HAP-1 (cell line): ENCODE measurements at regions of chr1 and their contacts with region 1.

Region 1: DNA sequence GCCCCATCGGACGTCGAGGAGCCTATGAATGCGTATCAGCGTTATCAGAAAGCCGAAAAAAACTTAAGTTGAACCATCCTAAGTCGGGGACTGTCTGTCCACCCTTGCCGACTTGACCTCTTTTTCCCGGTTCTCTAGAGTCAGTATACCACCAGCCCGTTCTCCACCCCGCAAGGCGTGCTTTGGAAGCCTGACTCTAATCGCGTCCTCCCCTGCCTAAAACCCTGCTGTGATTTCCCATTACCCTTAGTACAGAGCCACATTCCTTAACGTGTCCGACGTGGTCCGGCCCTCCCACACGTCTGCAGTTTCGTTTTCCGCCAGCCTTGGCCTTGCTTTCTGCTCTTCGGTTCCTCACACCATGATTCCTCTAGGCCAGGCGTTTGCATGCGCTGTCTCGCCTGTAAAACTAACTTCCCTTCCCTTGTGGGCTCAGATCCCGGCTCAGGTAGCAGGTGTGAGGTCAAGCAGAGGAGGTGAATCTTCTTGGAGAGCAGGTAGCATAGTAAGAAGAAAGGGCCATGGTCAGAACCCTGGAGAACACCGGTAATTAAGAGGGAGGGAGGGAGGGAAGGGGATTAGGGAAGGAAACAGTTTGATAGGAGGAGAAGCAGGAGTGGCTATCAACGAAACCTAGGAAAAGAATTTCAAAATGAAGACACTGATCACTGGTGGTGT is 891 bp downstream of the ADPRS start:
- DNase-seq: peak; percentile 26 to 44
- H3K4me3 ChIP-seq: peak overlapping the region; percentile 97
- H3K4me1 ChIP-seq: peaks cover 3% of the 10 kb centered on the region
- H3K27me3 ChIP-seq: no peaks in the 10 kb centered on the region

Region 2: GRCh38 chr1:35544978-35545377 is 544.6 kb before region 1 on chr1:
- in situ Hi-C with region 1: no loop called
- DNase-seq: peak; percentile 32 to 61
- H3K4me3 ChIP-seq: no peak overlapping the region
- H3K4me1 ChIP-seq: peaks cover 11% of the 10 kb centered on the region
- H3K27me3 ChIP-seq: no peaks in the 10 kb centered on the region

Region 3: GRCh38 chr1:36187800-36188593 is 98.4 kb after region 1 on chr1:
- in situ Hi-C with region 1: loop called (anchors 5 kb)
- DNase-seq: peak; percentile 64 to 86
- H3K4me3 ChIP-seq: no peak overlapping the region; the same call in 1 of the 2 replicates
- H3K4me1 ChIP-seq: no peaks in the 10 kb centered on the region
- H3K27me3 ChIP-seq: no peaks in the 10 kb centered on the region